Right ventricle myocardium superior (tissue), 1 donor: ENCODE measurements at regions of chr1 and their contacts with region 1.

Region 1: DNA sequence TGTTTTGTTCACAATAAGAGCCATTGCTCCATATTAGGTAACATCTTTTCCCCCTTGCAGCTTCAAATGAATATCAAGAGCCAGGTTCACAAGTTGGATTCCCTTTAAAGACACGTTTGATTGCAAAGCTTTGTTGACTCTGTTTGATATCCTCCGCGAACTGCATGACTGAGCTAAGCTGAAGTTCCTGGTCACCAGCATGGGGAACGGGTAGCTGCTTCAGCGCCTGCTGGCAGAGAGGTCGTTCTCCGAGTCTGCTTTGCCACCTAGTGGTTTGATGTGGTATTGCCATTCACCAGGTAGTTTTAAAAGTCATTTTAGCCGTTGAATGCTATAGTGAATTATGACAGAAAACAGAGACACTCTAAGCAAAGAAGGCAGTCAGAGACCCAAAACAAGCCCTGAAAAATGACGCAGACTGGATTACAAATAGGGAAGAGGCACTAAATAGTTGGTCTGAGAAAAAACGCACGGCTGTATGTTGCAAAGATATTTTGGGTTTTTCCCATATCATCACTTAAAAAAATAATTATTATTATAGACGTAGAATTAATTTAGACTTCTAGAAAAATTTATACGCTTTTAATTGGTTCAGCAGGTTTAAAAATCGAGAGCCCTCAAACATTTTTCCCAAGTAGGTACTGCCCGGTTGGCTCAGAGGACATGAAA is 193.5 kb upstream of the FMN2 start:
- DNase-seq: peak; percentile 71
- ATAC-seq: peak; percentile 92

Region 2: GRCh38 chr1:239413916-239414315 is 484.3 kb before region 1 on chr1:
- intact Hi-C with region 1: loop called (anchors 10 kb)
- DNase-seq: no peak
- ATAC-seq: no peak

Region 3: GRCh38 chr1:239997515-239998311 is 99.5 kb after region 1 on chr1:
- intact Hi-C with region 1: no loop called
- DNase-seq: no peak
- ATAC-seq: no peak